Prostate gland (tissue), 2 donors: ENCODE measurements at regions of chr17 and their contacts with region 1.

Region 1: DNA sequence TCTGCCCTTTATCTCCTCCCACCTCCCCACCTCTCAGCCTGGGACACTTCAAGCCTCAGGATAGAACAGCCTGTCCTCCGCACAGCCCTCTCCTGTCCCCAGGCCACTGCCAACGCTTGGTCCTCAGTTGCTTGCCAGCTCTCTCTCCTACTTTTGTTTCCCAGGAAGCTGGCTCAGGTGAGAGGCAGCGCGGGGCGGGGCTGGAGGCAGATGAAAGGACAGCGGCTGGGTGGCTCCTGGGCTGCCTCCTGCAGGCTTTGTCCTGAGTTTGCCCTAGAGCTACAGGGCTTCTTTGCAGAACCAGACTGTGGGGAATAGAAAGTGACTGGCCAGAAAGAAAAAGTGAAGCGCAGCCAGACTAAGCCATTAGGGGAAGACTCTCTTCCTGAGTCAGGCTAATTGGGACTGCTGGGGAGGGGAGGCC is 48.2 kb upstream of the CDC42EP4 start:
- DNase-seq: peak; percentile 96
- H3K4me3 ChIP-seq: no peak overlapping the region
- H3K27ac ChIP-seq: peak overlapping the region; percentile 69 to 76
- H3K4me1 ChIP-seq: peaks cover 18% of the 10 kb centered on the region
- H3K27me3 ChIP-seq: no peaks in the 10 kb centered on the region
- CTCF ChIP-seq: peak in 3 of 4 experiments; percentile 24 to 69 (median 56)
- POLR2A ChIP-seq: peak; percentile 13

Region 2: DNA sequence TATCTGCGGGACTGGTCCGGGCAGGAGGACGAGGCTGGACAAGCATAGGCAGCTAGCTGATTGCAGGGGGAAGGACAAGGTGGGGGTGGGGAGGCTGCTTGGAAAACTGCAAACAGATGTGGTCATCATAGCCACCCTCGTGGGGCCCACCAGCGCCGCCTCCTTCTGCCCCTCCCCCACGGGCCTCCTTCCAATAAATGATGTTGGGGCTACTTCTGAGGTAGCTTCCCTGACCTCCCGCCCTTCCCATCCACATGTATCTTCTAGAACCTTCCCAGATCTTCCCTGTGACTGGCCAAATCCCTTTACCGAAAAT is 35.9 kb before region 1 on chr17:
- intact Hi-C with region 1: loop called (anchors 5 kb)
- DNase-seq: no peak
- H3K4me3 ChIP-seq: no peak overlapping the region
- H3K27ac ChIP-seq: no peak overlapping the region
- H3K4me1 ChIP-seq: no peaks in the 10 kb centered on the region
- H3K27me3 ChIP-seq: no peaks in the 10 kb centered on the region
- CTCF ChIP-seq: no peak
- POLR2A ChIP-seq: no peak

Region 3: GRCh38 chr17:73410586-73411312 is 50.8 kb after region 1 on chr17:
- intact Hi-C with region 1: no loop called
- DNase-seq: no peak
- H3K4me3 ChIP-seq: no peak overlapping the region
- H3K27ac ChIP-seq: no peak overlapping the region
- H3K4me1 ChIP-seq: no peaks in the 10 kb centered on the region
- H3K27me3 ChIP-seq: no peaks in the 10 kb centered on the region
- CTCF ChIP-seq: no peak
- POLR2A ChIP-seq: no peak